Thyroid gland (tissue), 4 donors: ENCODE measurements at regions of chr15 and their contacts with region 1.

Region 1: GRCh38 chr15:74835307-74835823 is 7.6 kb downstream of the ULK3 start:
- DNase-seq: peak; percentile 58 to 65
- H3K4me3 ChIP-seq: no peak overlapping the region
- H3K27ac ChIP-seq: no peak overlapping the region
- H3K4me1 ChIP-seq: no peaks in the 10 kb centered on the region
- H3K27me3 ChIP-seq: no peaks in the 10 kb centered on the region
- CTCF ChIP-seq: peak; percentile 32 to 75 (median 59)
- POLR2A ChIP-seq: no peak

Region 2: GRCh38 chr15:74716644-74717043 is 118.7 kb before region 1 on chr15:
- intact Hi-C with region 1: no loop called
- DNase-seq: no peak
- H3K4me3 ChIP-seq: no peak overlapping the region
- H3K27ac ChIP-seq: no peak overlapping the region
- H3K4me1 ChIP-seq: no peaks in the 10 kb centered on the region
- H3K27me3 ChIP-seq: no peaks in the 10 kb centered on the region
- CTCF ChIP-seq: no peak
- POLR2A ChIP-seq: no peak

Region 3: GRCh38 chr15:74950078-74951000 is 115.0 kb after region 1 on chr15:
- intact Hi-C with region 1: loop called (anchors 10 kb)
- DNase-seq: peak; percentile 77 to 80
- H3K4me3 ChIP-seq: no peak overlapping the region
- H3K27ac ChIP-seq: no peak overlapping the region
- H3K4me1 ChIP-seq: peaks cover 10 to 18% of the 10 kb centered on the region in 2 donors
- H3K27me3 ChIP-seq: no peaks in the 10 kb centered on the region
- CTCF ChIP-seq: peak; percentile 94 to 100 (median 99)
- POLR2A ChIP-seq: no peak

Region 4: GRCh38 chr15:75625542-75626347 is 790.4 kb after region 1 on chr15 and contains the start of gene SNUPN:
- intact Hi-C with region 1: no loop called
- DNase-seq: peak; percentile 94 to 95
- H3K4me3 ChIP-seq: peak within 1 kb of the TSS; percentile 77 to 99 (median 89)
- H3K27ac ChIP-seq: peak within 1 kb of the TSS; percentile 97 to 100 (median 99)
- H3K4me1 ChIP-seq: peaks cover 5 to 24% of the 10 kb centered on the region in 2 donors
- H3K27me3 ChIP-seq: no peaks in the 10 kb centered on the region
- CTCF ChIP-seq: no peak
- POLR2A ChIP-seq: peak in 1 of 2 donors; percentile 57
- total RNA-seq, gene SNUPN: 24.7 to 31.8 (median 27.8) TPM